ENCODE measurements at regions of chr16 and their contacts with region 1.

Region 1: GRCh38 chr16:19601083-19601976 is 45.8 kb downstream of the VPS35L start:
- DNase-seq: no peak
- H3K4me3 ChIP-seq: no peak overlapping the region
- H3K27me3 ChIP-seq: no peaks in the 10 kb centered on the region
- CTCF ChIP-seq: peak; percentile 57

Region 2: DNA sequence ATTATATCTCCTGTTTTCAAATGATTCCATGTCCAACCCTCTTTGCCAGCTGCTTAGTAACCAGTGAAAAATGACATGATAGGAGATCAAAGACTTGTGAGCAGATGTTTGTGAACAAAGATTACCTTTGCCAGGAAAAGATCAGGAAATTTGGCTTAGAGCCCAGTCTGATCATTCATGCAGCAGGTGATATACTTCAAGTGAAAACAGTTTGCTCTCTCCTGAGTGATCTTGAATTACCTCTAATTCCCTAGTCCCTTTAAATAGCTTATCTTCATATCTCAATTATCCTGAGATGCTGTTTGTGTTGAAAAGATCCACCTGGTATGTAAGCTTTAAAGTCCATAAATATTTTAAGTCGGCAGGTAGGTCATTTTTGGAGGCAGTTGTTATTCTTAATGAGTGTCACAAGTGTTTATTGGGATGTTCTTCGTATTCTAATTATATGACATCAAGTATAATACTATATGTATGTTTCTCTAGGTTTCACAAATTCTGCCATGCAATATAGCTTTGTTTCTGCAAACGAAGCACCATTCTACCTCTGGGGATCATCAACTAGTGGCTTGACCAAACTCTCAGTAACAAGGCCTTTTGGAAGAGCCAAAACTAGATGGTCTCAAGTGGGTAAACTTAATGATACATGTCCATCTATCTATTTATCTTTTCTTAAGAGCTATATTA is 59.0 kb before region 1 on chr16:
- CTCF ChIA-PET with region 1: no interaction called
- POLR2A ChIA-PET with region 1: no interaction called
- DNase-seq: no peak
- H3K4me3 ChIP-seq: no peak overlapping the region
- H3K27me3 ChIP-seq: no peaks in the 10 kb centered on the region
- CTCF ChIP-seq: no peak

Region 3: DNA sequence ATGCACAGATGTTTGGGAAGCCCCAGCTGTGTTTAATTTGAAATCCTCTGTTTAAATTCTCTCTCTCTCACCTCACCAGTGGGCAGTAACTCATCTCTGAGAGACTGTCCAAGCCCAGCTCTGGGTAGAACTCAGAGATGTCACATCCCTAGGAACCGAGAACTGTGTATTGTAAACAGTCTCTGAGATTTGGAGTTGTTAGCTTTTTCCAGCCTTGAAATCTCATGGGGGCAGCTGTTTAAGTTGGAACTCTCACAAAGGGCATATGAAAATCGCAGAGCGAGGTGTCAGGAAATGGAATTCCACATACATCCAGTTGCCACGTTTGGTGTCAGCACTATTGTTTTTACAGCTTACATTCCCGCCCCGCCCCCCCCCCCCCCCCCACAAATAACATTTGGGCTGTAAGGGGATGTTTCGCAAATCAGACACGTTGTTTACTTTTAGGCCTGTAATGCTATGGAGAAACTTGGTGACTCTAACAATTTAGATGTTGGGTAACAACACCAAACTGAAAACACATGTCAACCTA is 11.5 kb before region 1 on chr16:
- CTCF ChIA-PET with region 1: interaction called, 46 read pairs
- POLR2A ChIA-PET with region 1: no interaction called
- DNase-seq: peak; percentile 58
- H3K4me3 ChIP-seq: no peak overlapping the region
- H3K27me3 ChIP-seq: no peaks in the 10 kb centered on the region
- CTCF ChIP-seq: no peak

Region 4: GRCh38 chr16:19613834-19614233 is 12.5 kb after region 1 on chr16:
- CTCF ChIA-PET with region 1: interaction called, 16 read pairs
- POLR2A ChIA-PET with region 1: no interaction called
- DNase-seq: no peak
- H3K4me3 ChIP-seq: no peak overlapping the region
- H3K27me3 ChIP-seq: no peaks in the 10 kb centered on the region
- CTCF ChIP-seq: no peak

Region 5: GRCh38 chr16:19680881-19681340 is 79.6 kb after region 1 on chr16:
- CTCF ChIA-PET with region 1: no interaction called
- POLR2A ChIA-PET with region 1: no interaction called
- DNase-seq: no peak
- H3K4me3 ChIP-seq: no peak overlapping the region
- H3K27me3 ChIP-seq: no peaks in the 10 kb centered on the region
- CTCF ChIP-seq: peak; percentile 27; the same call in 1 of the 2 replicates

Region 6: DNA sequence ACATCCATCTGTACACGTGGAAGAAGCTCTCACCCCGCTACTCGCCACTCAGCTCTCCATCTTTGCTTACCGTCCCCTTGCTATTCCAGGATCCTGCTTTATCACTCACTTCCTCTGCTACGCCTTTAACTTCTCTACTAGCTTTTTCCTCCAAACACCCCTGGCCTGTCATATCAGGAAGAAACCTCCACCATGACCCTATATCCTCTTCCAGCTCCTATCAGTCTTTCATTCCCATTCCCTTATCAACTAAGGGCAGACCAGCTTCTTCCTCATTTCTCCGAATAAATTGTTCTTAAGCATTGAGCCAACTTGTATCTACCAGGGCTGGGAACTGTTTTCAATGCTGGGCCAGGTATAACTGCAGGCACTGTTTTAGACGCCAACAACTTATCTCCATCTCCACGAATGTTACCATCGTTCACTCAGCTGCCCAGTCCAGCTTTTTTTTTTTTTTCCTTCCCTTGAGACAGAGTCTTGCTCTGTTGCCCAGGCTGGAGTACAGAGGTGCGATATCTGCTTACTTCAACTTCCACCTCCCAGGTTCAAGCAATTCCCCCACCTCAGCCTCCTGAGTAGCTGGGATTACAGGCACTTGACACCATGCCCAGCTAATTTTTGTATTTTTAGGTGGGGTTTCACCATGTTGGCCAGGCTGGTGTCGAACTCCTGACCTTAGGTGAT is 121.1 kb after region 1 on chr16:
- CTCF ChIA-PET with region 1: no interaction called
- POLR2A ChIA-PET with region 1: no interaction called
- DNase-seq: no peak
- H3K4me3 ChIP-seq: no peak overlapping the region
- H3K27me3 ChIP-seq: no peaks in the 10 kb centered on the region
- CTCF ChIP-seq: no peak

Region 7: DNA sequence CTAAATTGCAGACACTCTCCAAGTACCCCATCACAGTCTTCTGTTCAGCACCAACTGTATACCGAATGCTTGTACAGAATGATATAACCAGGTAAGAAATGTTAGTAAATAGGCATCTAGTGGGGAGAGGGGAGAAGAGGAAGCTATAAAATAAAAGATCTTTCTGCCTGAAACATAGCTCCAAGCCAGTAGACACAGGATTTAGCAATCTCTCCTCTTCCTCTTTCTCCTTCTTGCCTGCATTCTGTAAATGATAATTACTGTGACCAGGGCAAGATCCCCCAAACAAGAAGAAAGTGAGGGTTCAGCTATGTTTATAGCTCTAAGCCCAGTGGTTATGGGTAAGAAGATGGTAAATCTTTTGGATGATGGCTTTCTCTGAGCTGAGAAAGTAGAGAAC is 1180.4 kb after region 1 on chr16:
- CTCF ChIA-PET with region 1: no interaction called
- POLR2A ChIA-PET with region 1: no interaction called
- DNase-seq: no peak
- H3K4me3 ChIP-seq: no peak overlapping the region
- H3K27me3 ChIP-seq: no peaks in the 10 kb centered on the region
- CTCF ChIP-seq: no peak

Measured in BJ (cell line).